Activated CD4-positive, alpha-beta memory T cell treated with anti-CD3 and anti-CD28 coated beads for 36 hours (primary cell): ENCODE measurements at regions of chr10 and their contacts with region 1.

Region 1: GRCh38 chr10:91797874-91798648 is at the start of gene TNKS2:
- DNase-seq: peak; percentile 95
- H3K4me3 Mint-ChIP-seq: peak within 1 kb of the TSS; percentile 86
- H3K27ac Mint-ChIP-seq: peak within 1 kb of the TSS; percentile 91
- H3K4me1 Mint-ChIP-seq: peaks cover 53% of the 10 kb centered on the region
- H3K27me3 Mint-ChIP-seq: peaks cover 1% of the 10 kb centered on the region
- total RNA-seq, gene TNKS2: 34.5 to 35.7 TPM

Region 2: GRCh38 chr10:91163269-91163868 is 634.7 kb before region 1 on chr10:
- CTCF ChIA-PET with region 1: no interaction called
- POLR2A ChIA-PET with region 1: no interaction called
- intact Hi-C with region 1: loop called (anchors 5 kb)
- DNase-seq: peak; percentile 79
- H3K4me3 Mint-ChIP-seq: peak overlapping the region; percentile 82
- H3K27ac Mint-ChIP-seq: peak overlapping the region; percentile 87
- H3K4me1 Mint-ChIP-seq: peaks cover 47% of the 10 kb centered on the region
- H3K27me3 Mint-ChIP-seq: no peaks in the 10 kb centered on the region

Region 3: DNA sequence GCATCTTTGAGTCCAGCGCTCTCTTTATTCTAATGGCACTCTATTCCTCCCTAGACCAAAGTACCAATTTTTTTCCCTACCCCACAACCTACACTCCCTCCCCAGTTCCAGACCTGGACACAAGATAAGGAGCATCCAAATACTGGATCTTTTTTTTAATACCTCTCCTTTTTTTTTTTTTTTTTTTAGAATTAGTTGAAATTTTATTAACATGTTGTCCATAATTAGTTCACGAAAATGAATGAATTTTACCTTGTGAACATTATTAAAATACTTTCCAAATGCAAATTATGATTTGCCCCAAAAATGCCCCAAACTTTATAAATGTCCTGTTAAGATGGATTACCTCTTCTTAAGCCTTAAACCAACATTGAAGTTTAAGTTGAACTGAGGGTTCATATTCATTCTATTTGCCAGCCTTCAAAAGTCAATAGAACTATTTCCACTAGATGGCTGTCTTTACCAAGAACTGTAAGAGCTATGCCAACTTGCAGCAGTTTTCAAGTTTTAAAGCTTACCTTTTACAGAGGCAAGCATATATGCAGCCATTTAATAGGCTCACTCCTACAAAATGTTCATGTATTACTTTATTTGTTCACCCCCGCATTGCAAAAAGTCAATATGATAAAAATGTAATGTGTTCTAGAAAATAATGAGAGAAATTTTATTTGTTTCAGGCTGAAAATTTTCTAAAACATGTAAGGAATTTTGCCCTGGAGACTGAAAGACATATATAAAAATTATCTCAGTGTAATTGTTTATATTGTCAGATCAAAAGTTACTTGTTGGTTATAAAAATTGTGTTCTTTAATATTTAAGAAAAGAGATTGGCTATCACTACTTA is 39.5 kb before region 1 on chr10:
- CTCF ChIA-PET with region 1: interaction called, 26 read pairs
- POLR2A ChIA-PET with region 1: no interaction called
- intact Hi-C with region 1: loop called (anchors 1 kb)
- DNase-seq: no peak
- H3K4me3 Mint-ChIP-seq: no peak overlapping the region
- H3K27ac Mint-ChIP-seq: no peak overlapping the region
- H3K4me1 Mint-ChIP-seq: no peaks in the 10 kb centered on the region
- H3K27me3 Mint-ChIP-seq: peaks cover 14% of the 10 kb centered on the region

Region 4: DNA sequence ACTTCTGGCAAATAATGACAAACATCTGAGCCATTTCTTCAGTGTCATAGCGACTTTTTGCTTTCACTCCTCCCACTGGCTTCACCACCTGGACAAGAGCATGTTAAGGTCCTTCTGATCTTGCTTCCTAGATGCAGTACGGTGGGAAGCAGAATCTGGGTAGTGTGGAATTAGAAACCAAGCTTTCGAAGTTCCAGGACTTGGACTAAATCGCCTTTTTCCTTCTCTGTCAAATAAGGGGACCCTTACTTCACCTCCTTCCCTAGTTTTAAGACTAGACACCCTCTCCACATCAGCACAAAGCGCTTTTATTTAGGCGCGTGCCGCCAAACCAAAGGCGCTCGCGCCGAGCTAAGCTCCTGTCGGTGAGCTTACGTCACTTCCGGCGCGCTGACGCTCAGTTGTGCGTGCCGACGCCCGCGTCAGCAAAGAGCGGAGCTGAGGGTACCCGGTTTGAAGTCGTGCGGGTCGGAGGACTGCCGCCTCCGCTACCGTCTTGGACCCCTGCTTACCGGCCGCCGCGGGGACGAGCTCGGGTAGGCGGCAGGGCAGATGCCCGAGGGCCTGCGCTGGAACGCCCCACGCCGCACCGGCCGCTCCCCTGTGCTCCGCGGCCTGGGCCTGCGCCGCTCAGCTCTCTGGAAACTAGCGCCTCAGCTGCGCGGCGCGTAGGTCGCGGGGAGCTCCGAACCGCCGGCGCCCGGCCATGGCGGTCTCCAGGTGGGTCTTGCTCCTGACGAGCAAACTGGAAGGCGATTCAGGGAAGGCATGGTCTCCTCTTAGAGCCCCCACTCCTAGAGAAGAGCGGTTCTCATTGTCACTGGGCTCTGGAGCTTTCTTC is 125.5 kb after region 1 on chr10 and contains the start of gene BTAF1:
- CTCF ChIA-PET with region 1: interaction called, 5 read pairs
- POLR2A ChIA-PET with region 1: interaction called, 16 read pairs
- intact Hi-C with region 1: loop called (anchors 1 kb)
- DNase-seq: peak; percentile 94
- H3K4me3 Mint-ChIP-seq: peak within 1 kb of the TSS; percentile 88
- H3K27ac Mint-ChIP-seq: peak within 1 kb of the TSS; percentile 97
- H3K4me1 Mint-ChIP-seq: peaks cover 37% of the 10 kb centered on the region
- H3K27me3 Mint-ChIP-seq: peaks cover 1% of the 10 kb centered on the region
- total RNA-seq, gene BTAF1: 49.9 to 50.7 TPM

Region 5: DNA sequence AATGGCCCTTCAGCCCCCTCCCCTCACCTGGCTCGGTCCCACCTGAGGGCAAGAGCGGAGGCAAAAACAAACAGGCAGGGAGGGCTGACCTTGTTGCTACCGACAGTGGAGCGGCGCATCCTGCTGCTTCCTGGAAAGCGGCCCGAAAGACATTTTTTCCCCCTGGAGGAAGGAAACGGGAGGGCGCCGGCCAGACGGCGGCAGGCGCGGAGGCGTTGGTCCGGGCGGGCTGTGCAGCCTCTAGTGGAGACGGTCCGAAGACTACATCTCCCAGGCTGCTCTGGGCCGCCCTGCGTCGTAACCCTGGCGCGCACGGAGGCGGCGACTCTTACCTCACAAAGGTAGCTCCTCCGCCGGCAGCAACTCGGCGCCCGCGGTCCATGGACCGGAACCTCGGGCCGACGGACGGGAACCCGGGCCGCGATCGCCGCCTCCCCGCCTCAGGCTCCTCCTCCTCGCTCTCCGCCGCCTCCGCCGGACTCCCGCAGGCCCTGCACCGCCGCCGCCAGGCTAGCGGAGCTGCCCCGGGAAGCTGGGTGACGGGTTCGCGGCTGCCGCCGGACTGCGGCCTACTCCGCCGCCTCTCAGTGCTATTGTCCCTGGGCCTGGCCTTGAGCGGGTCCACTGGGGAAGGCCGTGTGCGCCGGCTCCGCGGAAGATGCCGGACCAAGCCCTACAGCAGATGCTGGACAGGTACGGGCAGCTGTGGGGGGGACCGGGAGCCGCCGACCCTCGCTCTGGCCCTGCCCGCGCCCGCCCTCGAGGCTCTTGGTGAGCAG is 493.0 kb after region 1 on chr10 and contains the starts of genes CPEB3 and MARCHF5:
- CTCF ChIA-PET with region 1: no interaction called
- POLR2A ChIA-PET with region 1: no interaction called
- intact Hi-C with region 1: loop called (anchors 2 kb)
- DNase-seq: peak; percentile 96
- H3K4me3 Mint-ChIP-seq: peak within 1 kb of the TSS; percentile 83
- H3K27ac Mint-ChIP-seq: peak within 1 kb of the TSS; percentile 79
- H3K4me1 Mint-ChIP-seq: peaks cover 21% of the 10 kb centered on the region
- H3K27me3 Mint-ChIP-seq: no peaks in the 10 kb centered on the region
- total RNA-seq, gene CPEB3: 1.4 to 1.6 TPM
- total RNA-seq, gene MARCHF5: 27.4 to 29.1 TPM